Ascending aorta (tissue), 2 donors: ENCODE measurements at regions of chr18 and their contacts with region 1.

Region 1: GRCh38 chr18:21704603-21705364 is at the start of gene ABHD3:
- DNase-seq: peak; percentile 73 to 96
- H3K4me3 ChIP-seq: peak within 1 kb of the TSS; percentile 94 to 98
- H3K27ac ChIP-seq: peak within 1 kb of the TSS; percentile 96 to 97
- H3K4me1 ChIP-seq: peaks cover 0 to 2% of the 10 kb centered on the region in 2 donors
- H3K27me3 ChIP-seq: no peaks in the 10 kb centered on the region
- CTCF ChIP-seq: peak; percentile 48 to 83 (median 49)
- total RNA-seq, gene ABHD3: 9.6 TPM

Region 2: GRCh38 chr18:21111341-21112139 is 593.2 kb before region 1 on chr18 and contains the start of gene ROCK1:
- intact Hi-C with region 1: loop called (anchors 2 kb)
- DNase-seq: peak; percentile 96 to 99
- H3K4me3 ChIP-seq: peak within 1 kb of the TSS; percentile 95 to 99
- H3K27ac ChIP-seq: peak within 1 kb of the TSS; percentile 98 to 99
- H3K4me1 ChIP-seq: peaks cover 16% of the 10 kb centered on the region in 2 donors
- H3K27me3 ChIP-seq: no peaks in the 10 kb centered on the region
- CTCF ChIP-seq: no peak
- total RNA-seq, gene ROCK1: 32.0 TPM

Region 3: GRCh38 chr18:21600526-21601410 is 104.0 kb before region 1 on chr18 and contains the start of gene ESCO1:
- intact Hi-C with region 1: loop called (anchors 1 kb)
- DNase-seq: peak; percentile 85 to 97
- H3K4me3 ChIP-seq: peak within 1 kb of the TSS; percentile 74 to 96
- H3K27ac ChIP-seq: peak within 1 kb of the TSS; percentile 92 to 98
- H3K4me1 ChIP-seq: peaks cover 0 to 2% of the 10 kb centered on the region in 2 donors
- H3K27me3 ChIP-seq: no peaks in the 10 kb centered on the region
- CTCF ChIP-seq: peak; percentile 98
- total RNA-seq, gene ESCO1: 3.8 TPM

Region 4: DNA sequence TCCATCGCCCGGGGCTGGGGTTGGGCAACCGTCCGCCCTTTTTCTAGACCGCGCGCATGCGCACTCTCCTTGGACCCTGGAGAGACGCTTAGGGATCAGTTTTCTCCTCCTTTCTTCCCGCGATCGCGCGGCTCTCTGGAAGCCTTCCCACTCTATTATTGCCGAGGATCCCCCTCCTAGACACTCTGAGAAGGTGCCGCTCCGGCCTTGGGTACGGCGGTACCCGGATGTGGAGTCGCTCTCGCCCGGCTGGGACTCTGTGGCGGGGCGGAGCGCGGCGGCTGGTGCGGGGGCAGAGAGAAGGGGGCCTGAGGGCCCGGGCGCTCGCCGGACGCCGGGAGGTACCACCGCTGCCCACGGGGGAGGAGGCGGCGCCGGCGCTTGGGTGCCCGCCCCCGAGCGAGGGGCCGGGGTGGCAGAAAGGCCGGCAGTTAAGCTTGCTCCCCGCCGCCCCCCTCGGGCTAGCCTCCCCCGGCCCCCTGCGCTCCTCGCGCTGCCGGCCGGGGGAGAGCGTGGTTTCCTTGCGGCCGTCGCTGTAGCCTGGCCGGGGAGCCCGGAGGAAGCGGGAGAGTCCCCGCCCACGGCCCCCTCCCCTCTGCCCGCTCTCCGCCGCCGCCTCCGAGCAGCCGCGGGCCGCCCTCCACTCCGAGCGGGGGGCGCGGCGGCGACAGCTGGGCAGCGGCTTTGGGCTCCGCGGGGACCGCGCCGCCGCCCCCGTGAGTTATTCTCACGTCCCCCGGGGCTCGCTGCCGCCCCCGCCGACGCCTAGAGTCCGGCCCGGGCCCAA is 36.1 kb after region 1 on chr18 and contains the start of gene MIB1:
- intact Hi-C with region 1: loop called (anchors 1 kb)
- DNase-seq: peak in 1 of 2 donors; percentile 93
- H3K4me3 ChIP-seq: peak within 1 kb of the TSS; percentile 76 to 88
- H3K27ac ChIP-seq: peak within 1 kb of the TSS; percentile 96 to 99
- H3K4me1 ChIP-seq: peaks cover 0 to 5% of the 10 kb centered on the region in 2 donors
- H3K27me3 ChIP-seq: no peaks in the 10 kb centered on the region
- CTCF ChIP-seq: no peak
- total RNA-seq, gene MIB1: 11.0 TPM

Region 5: GRCh38 chr18:21803495-21803894 is 98.7 kb after region 1 on chr18:
- intact Hi-C with region 1: loop called (anchors 10 kb)
- DNase-seq: no peak
- H3K4me3 ChIP-seq: no peak overlapping the region
- H3K27ac ChIP-seq: no peak overlapping the region
- H3K4me1 ChIP-seq: peaks cover 4 to 7% of the 10 kb centered on the region in 2 donors
- H3K27me3 ChIP-seq: no peaks in the 10 kb centered on the region
- CTCF ChIP-seq: no peak

Region 6: GRCh38 chr18:21831413-21831831 is 126.6 kb after region 1 on chr18:
- intact Hi-C with region 1: loop called (anchors 2 kb)
- DNase-seq: peak; percentile 26 to 85
- H3K4me3 ChIP-seq: peak overlapping the region; percentile 18 to 55
- H3K27ac ChIP-seq: peak overlapping the region; percentile 67 to 77
- H3K4me1 ChIP-seq: peaks cover 0 to 20% of the 10 kb centered on the region in 2 donors
- H3K27me3 ChIP-seq: no peaks in the 10 kb centered on the region
- CTCF ChIP-seq: no peak

Region 7: DNA sequence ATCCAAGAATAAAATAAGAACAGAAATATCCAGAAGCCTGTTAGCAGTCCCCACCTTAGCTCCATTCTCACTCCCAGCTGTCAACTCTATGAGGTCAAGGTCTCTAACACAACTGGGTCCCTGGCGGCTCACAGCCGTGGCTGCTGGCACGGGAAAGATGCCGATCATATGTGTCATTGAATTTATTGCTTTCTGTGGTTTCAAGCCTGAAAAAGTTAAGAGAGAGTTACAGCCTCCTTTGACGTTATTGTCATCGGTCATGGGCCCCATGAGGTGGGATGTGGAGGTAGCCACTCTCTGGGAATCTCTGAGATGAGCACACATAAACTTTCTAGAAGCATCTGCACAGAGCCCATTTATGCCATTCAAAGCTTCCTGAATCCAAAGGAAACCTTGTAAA is 1401.8 kb after region 1 on chr18:
- intact Hi-C with region 1: loop called (anchors 5 kb)
- DNase-seq: peak in 1 of 2 donors; percentile 82
- H3K4me3 ChIP-seq: no peak overlapping the region
- H3K27ac ChIP-seq: peak overlapping the region; percentile 79 to 84
- H3K4me1 ChIP-seq: peaks cover 0 to 19% of the 10 kb centered on the region in 2 donors
- H3K27me3 ChIP-seq: no peaks in the 10 kb centered on the region
- CTCF ChIP-seq: no peak